ENCODE measurements at regions of chrX and their contacts with region 1.

Region 1: DNA sequence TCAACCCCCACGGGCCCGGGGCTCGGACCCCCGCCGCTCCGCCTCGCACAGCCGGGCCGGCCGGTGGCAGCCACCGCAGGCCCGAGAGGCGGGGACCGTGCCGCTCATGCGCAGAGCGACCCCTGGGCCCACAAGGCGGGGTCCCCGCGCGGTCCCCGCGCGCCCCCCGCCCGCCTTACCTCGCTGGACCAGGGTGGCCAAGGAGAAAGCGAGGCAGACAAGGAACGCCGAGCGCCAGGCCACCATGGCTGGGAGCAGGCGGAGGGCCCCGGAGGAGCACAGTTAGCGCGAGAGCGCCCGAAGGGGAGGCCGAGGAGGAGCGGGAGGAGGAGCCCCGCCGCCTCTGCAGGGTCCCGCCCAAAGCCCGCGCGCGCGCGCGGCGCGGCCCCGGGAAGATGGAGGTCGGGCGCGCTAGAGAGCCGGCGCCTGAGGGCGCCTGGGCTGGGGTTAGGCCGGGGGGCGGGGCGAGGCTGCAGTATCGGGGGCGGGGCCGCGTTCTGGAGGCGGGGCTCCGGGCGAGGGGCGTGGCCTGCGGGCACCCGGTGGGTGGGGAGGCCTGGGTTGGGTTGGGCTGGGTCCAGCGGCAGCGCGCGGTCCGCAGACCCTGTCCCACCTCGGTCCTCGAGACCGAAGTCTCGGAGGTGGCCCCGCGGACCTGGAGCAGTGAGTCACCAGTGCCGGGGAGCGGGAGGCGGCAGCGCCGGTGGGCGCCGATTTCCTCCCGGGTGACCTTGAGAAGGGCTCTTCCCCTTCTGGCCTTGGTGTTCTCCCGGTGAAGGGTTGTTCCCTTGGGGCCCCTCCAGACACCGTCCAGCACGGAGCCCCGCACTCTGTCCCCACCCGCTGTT is at the start of gene CD99L2:
- DNase-seq: peak; percentile 61
- ATAC-seq: peak; percentile 94
- H3K4me3 ChIP-seq: peak within 1 kb of the TSS; percentile 55 to 63
- H3K27ac ChIP-seq: peak within 1 kb of the TSS; percentile 65
- H3K4me1 ChIP-seq: peaks cover 0 to 13% of the 10 kb centered on the region in 2 experiments; a peak in 2 of 4 replicates
- H3K27me3 ChIP-seq: no peaks in the 10 kb centered on the region
- CTCF ChIP-seq: no peak
- POLR2A ChIP-seq: peak; percentile 39
- RAD21 ChIP-seq: no peak
- total RNA-seq, gene CD99L2: 6.2 TPM

Region 2: GRCh38 chrX:149938427-149939270 is 959.9 kb before region 1 on chrX and contains the start of gene EOLA2:
- CTCF ChIA-PET with region 1: no interaction called
- POLR2A ChIA-PET with region 1: no interaction called
- RAD21 ChIA-PET with region 1: no interaction called
- intact Hi-C with region 1: loop called (anchors 5 kb)
- DNase-seq: peak; percentile 95
- ATAC-seq: peak; percentile 68
- H3K4me3 ChIP-seq: peak within 1 kb of the TSS; percentile 78 to 84
- H3K27ac ChIP-seq: peak within 1 kb of the TSS; percentile 83
- H3K4me1 ChIP-seq: peaks cover 0 to 9% of the 10 kb centered on the region in 2 experiments; a peak in 1 of 4 replicates
- H3K27me3 ChIP-seq: no peaks in the 10 kb centered on the region
- CTCF ChIP-seq: peak in 2 of 3 experiments; percentile 51 to 59; a peak in 4 of 6 replicates
- POLR2A ChIP-seq: peak; percentile 16
- RAD21 ChIP-seq: no peak
- total RNA-seq, gene EOLA2: 26.4 TPM

Region 3: DNA sequence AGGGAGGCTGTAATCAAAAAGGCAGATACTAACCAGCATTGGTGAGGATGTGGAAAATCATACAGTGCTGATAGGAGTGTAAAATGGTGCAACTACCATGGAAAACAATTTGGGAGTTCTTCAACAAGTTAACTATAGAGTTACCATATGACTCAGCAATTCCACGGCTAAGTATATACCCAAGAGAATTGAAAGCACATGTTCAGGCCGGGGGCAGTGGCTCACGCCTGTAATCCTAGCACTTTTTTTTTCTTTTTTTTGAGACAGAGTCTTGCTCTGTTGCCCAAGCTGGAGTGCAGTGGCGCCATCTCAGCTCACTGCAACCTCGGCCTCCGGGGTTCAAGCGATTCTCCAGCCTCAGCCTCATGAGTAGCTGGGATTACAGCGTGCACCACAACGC is 14.9 kb after region 1 on chrX:
- CTCF ChIA-PET with region 1: no interaction called
- POLR2A ChIA-PET with region 1: no interaction called
- RAD21 ChIA-PET with region 1: no interaction called
- intact Hi-C with region 1: no loop called
- DNase-seq: no peak
- ATAC-seq: no peak
- H3K4me3 ChIP-seq: no peak overlapping the region
- H3K27ac ChIP-seq: no peak overlapping the region
- H3K4me1 ChIP-seq: no peaks in the 10 kb centered on the region
- H3K27me3 ChIP-seq: no peaks in the 10 kb centered on the region
- CTCF ChIP-seq: no peak
- POLR2A ChIP-seq: no peak
- RAD21 ChIP-seq: no peak

Region 4: GRCh38 chrX:150982788-150983520 is 84.4 kb after region 1 on chrX and contains the start of gene HMGB3:
- CTCF ChIA-PET with region 1: no interaction called
- POLR2A ChIA-PET with region 1: no interaction called
- RAD21 ChIA-PET with region 1: no interaction called
- intact Hi-C with region 1: loop called (anchors 10 kb)
- DNase-seq: peak; percentile 84
- ATAC-seq: peak; percentile 98
- H3K4me3 ChIP-seq: peak within 1 kb of the TSS; percentile 40 to 56
- H3K27ac ChIP-seq: peak within 1 kb of the TSS; percentile 78
- H3K4me1 ChIP-seq: peaks cover 4 to 12% of the 10 kb centered on the region in 2 experiments; a peak in 3 of 4 replicates
- H3K27me3 ChIP-seq: no peaks in the 10 kb centered on the region
- CTCF ChIP-seq: no peak
- POLR2A ChIP-seq: no peak
- RAD21 ChIP-seq: no peak
- total RNA-seq, gene HMGB3: 116 TPM

Region 5: GRCh38 chrX:151004082-151004481 is 105.5 kb after region 1 on chrX:
- CTCF ChIA-PET with region 1: no interaction called
- POLR2A ChIA-PET with region 1: no interaction called
- RAD21 ChIA-PET with region 1: no interaction called
- intact Hi-C with region 1: no loop called
- DNase-seq: no peak
- ATAC-seq: no peak; the same call in 1 of the 2 replicates
- H3K4me3 ChIP-seq: no peak overlapping the region
- H3K27ac ChIP-seq: no peak overlapping the region
- H3K4me1 ChIP-seq: no peaks in the 10 kb centered on the region
- H3K27me3 ChIP-seq: no peaks in the 10 kb centered on the region
- CTCF ChIP-seq: 0 out of 6 replicates have a peak, but pooled peaks of 2 of the 3 experiments have one; percentile 9 to 12
- POLR2A ChIP-seq: no peak
- RAD21 ChIP-seq: peak; percentile 34

Measured in HCT116 (cell line).